Endothelial cell of umbilical vein (primary cell): ENCODE measurements at regions of chr18 and their contacts with region 1.

Region 1: DNA sequence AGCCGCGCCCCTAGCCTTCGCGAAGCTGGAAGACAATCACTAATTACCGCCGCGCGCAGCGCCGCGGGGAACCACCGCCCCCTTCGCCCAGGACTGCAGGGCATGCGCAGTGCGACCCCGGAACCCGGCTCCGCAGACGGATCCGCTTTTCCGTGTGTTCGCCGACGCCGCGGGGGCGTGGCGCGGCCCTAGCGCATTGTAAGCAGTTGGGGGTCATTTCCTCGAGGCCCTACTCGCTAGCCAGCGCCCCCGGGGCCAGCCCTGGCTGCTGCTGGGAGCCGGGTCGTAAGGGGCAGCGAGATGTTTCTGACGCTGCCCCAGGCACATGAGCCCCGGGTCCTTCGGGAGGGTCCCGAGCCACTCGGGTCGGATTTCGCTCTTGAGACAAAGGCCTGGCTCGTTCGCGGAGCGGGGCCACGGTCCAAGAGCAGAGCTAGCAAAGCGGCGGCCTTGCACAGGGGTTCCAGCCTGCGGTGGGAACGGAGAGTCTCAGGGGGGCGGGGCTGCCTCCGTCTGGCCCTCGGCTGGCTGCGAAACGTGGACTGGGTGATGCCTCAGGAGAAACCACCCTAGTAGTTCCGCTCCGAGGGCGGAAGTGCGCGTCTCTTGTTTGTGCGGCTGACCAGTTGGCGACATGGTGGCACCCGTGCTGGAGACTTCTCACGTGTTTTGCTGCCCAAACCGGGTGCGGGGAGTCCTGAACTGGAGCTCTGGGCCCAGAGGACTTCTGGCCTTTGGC is at the starts of genes ELP2 and SLC39A6:
- DNase-seq: peak; percentile 98
- H3K4me3 ChIP-seq: peak within 1 kb of the TSS; percentile 64 to 96 (median 94)
- H3K27ac ChIP-seq: peak within 1 kb of the TSS; percentile 98
- H3K4me1 ChIP-seq: peaks cover 15% of the 10 kb centered on the region
- H3K27me3 ChIP-seq: no peaks in the 10 kb centered on the region
- CTCF ChIP-seq: no peak
- POLR2A ChIP-seq: peak; percentile 67
- total RNA-seq, gene ELP2: 74.8 and 90.5 TPM in 2 replicates
- total RNA-seq, gene SLC39A6: 13.2 and 13.8 TPM in 2 replicates

Region 2: DNA sequence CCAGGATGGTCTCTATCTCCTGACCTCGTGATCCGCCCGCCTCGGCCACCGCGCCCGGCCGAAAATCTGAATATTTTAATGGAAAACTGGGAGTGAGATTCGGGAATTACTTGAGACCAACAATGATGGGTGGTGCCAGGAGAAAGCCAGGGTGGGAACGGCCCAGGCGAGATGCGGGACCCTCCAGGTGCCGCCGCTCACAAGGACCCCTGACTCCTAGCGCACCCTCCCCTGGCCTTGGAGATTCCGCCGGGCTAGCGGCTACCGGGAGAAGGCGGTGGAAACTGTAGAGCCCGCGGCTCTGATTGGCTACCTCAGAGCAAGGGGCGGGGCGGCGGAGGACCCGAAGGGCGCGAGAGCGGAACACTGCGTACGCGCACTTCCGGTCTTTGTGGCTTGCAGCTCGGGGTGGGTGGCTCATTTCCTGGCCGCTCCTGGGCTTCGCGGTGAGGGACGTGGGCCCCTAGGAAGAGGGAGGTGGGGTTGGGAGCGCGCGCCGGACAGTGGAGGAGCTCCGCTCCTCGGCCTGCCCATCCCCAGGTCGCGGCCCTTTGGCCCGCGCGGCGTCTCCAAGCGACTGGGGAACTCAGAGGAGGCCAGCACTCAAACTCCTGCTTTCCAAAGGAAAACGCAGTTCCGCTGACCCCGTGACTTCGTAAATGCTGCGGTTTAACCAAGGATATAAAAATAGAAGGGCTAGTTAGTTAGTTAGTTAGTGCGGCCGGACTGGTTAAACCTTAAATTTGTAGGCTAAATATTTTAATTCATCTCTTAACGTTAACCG is 888.6 kb before region 1 on chr18 and contains the start of gene ZNF397:
- CTCF ChIA-PET with region 1: no interaction called
- POLR2A ChIA-PET with region 1: no interaction called
- dilution Hi-C with region 1: no loop called
- intact Hi-C with region 1: loop called (anchors 5 kb)
- DNase-seq: peak; percentile 97
- H3K4me3 ChIP-seq: peak within 1 kb of the TSS; percentile 55 to 73 (median 56)
- H3K27ac ChIP-seq: peak within 1 kb of the TSS; percentile 98
- H3K4me1 ChIP-seq: peaks cover 12% of the 10 kb centered on the region
- H3K27me3 ChIP-seq: no peaks in the 10 kb centered on the region
- CTCF ChIP-seq: no peak
- POLR2A ChIP-seq: peak; percentile 70
- total RNA-seq, gene ZNF397: 5.1 and 5.5 TPM in 2 replicates

Region 3: GRCh38 chr18:36015629-36016028 is 113.8 kb before region 1 on chr18:
- CTCF ChIA-PET with region 1: interaction called, 16 read pairs
- POLR2A ChIA-PET with region 1: interaction called, 6 read pairs
- dilution Hi-C with region 1: no loop called
- intact Hi-C with region 1: loop called (anchors 1 kb)
- DNase-seq: no peak
- H3K4me3 ChIP-seq: no peak overlapping the region
- H3K27ac ChIP-seq: no peak overlapping the region
- H3K4me1 ChIP-seq: no peaks in the 10 kb centered on the region
- H3K27me3 ChIP-seq: no peaks in the 10 kb centered on the region
- CTCF ChIP-seq: no peak
- POLR2A ChIP-seq: no peak

Region 4: GRCh38 chr18:36067055-36067957 is 62.2 kb before region 1 on chr18 and contains the start of gene RPRD1A:
- CTCF ChIA-PET with region 1: no interaction called
- POLR2A ChIA-PET with region 1: no interaction called
- dilution Hi-C with region 1: no loop called
- intact Hi-C with region 1: loop called (anchors 1 kb)
- DNase-seq: peak; percentile 97
- H3K4me3 ChIP-seq: peak within 1 kb of the TSS; percentile 60 to 92 (median 83)
- H3K27ac ChIP-seq: peak within 1 kb of the TSS; percentile 71
- H3K4me1 ChIP-seq: peaks cover 15% of the 10 kb centered on the region
- H3K27me3 ChIP-seq: no peaks in the 10 kb centered on the region
- CTCF ChIP-seq: no peak
- POLR2A ChIP-seq: peak; percentile 36
- total RNA-seq, gene RPRD1A: 47.4 and 50.7 TPM in 2 replicates

Region 5: GRCh38 chr18:36186911-36187834 is 57.7 kb after region 1 on chr18 and contains the start of gene MOCOS:
- CTCF ChIA-PET with region 1: interaction called, 4 read pairs
- POLR2A ChIA-PET with region 1: interaction called, 6 read pairs
- dilution Hi-C with region 1: no loop called
- intact Hi-C with region 1: loop called (anchors 1 kb)
- DNase-seq: peak; percentile 39
- H3K4me3 ChIP-seq: peak within 1 kb of the TSS; percentile 49 to 79 (median 59)
- H3K27ac ChIP-seq: no peak within 1 kb of the TSS
- H3K4me1 ChIP-seq: peaks cover 4% of the 10 kb centered on the region
- H3K27me3 ChIP-seq: peaks cover 0 to 8% of the 10 kb centered on the region in 2 experiments
- CTCF ChIP-seq: no peak
- POLR2A ChIP-seq: no peak
- total RNA-seq, gene MOCOS: 0.85 and 0.88 TPM in 2 replicates

Region 6: DNA sequence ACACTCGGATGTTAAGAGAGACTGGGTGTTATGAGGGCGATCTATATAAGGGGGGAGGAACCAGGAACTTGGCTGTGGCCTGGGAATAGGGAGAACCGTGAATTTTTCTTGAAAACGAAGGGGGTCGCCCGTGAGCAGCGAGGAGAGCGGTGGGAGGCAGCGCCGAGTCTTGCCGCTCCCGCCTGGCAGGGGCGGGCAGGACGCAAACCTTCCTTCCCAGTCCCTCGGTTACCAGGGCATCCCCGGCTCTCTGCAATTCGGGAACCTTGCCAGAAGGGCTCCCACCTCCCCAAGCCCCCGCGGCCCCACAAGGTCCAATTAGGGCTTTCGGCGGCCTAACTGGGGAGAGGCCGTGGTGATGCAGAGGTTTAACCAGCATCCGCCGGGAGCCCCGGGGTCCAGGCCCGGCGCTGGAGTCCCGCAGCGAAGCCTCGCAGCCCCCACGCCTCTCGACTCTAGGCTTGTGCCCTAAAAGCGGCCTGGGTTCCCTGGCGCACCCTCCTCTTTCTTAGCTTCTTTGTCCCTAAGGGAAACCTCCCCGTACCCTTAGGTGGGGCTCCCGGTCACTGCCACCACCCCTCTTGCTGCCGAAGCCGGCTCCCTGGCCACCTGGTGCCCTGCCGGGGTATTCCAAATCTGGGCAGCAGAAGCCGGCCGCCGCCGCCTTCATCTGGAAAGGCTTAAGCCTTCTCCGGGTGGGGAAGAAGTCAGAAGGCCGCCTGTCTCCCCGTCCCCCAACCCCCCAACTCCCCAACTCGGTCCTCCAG is 167.4 kb after region 1 on chr18:
- CTCF ChIA-PET with region 1: no interaction called
- POLR2A ChIA-PET with region 1: no interaction called
- dilution Hi-C with region 1: no loop called
- intact Hi-C with region 1: loop called (anchors 5 kb)
- DNase-seq: peak; percentile 68
- H3K4me3 ChIP-seq: peak overlapping the region in 2 of 3 experiments; percentile 28 to 34
- H3K27ac ChIP-seq: no peak overlapping the region
- H3K4me1 ChIP-seq: peaks cover 10% of the 10 kb centered on the region
- H3K27me3 ChIP-seq: peaks cover 39 to 52% of the 10 kb centered on the region in 2 experiments
- CTCF ChIP-seq: peak; percentile 35 to 50
- POLR2A ChIP-seq: no peak

Region 7: GRCh38 chr18:36620788-36621187 is 491.3 kb after region 1 on chr18:
- CTCF ChIA-PET with region 1: no interaction called
- POLR2A ChIA-PET with region 1: no interaction called
- dilution Hi-C with region 1: no loop called
- intact Hi-C with region 1: no loop called
- DNase-seq: no peak
- H3K4me3 ChIP-seq: no peak overlapping the region
- H3K27ac ChIP-seq: no peak overlapping the region
- H3K4me1 ChIP-seq: no peaks in the 10 kb centered on the region
- H3K27me3 ChIP-seq: no peaks in the 10 kb centered on the region
- CTCF ChIP-seq: no peak
- POLR2A ChIP-seq: no peak

Region 8: DNA sequence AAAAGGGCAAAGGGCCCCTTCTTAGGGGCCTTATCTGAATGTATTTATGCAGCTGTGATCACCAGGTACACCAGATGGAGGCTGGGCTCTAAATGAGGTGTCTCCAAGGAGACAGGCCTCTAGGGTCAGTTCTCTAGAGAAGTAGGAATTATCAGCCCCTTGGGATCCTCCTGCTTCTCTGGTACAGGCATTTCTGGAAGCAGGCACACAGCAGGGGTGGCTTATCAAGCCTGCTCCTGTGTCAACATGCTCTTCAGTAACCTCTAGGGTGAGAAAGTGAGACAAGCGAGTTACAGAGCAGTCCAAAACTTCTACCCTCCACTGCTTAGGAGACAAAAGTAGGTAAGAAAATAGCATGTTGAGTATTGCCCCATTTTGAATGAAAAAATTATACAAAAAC is 685.5 kb after region 1 on chr18:
- CTCF ChIA-PET with region 1: no interaction called
- POLR2A ChIA-PET with region 1: no interaction called
- dilution Hi-C with region 1: no loop called
- intact Hi-C with region 1: no loop called
- DNase-seq: no peak
- H3K4me3 ChIP-seq: no peak overlapping the region
- H3K27ac ChIP-seq: no peak overlapping the region
- H3K4me1 ChIP-seq: no peaks in the 10 kb centered on the region
- H3K27me3 ChIP-seq: no peaks in the 10 kb centered on the region
- CTCF ChIP-seq: no peak
- POLR2A ChIP-seq: no peak